ENCODE measurements at regions of chr1 and their contacts with region 1.

Region 1: DNA sequence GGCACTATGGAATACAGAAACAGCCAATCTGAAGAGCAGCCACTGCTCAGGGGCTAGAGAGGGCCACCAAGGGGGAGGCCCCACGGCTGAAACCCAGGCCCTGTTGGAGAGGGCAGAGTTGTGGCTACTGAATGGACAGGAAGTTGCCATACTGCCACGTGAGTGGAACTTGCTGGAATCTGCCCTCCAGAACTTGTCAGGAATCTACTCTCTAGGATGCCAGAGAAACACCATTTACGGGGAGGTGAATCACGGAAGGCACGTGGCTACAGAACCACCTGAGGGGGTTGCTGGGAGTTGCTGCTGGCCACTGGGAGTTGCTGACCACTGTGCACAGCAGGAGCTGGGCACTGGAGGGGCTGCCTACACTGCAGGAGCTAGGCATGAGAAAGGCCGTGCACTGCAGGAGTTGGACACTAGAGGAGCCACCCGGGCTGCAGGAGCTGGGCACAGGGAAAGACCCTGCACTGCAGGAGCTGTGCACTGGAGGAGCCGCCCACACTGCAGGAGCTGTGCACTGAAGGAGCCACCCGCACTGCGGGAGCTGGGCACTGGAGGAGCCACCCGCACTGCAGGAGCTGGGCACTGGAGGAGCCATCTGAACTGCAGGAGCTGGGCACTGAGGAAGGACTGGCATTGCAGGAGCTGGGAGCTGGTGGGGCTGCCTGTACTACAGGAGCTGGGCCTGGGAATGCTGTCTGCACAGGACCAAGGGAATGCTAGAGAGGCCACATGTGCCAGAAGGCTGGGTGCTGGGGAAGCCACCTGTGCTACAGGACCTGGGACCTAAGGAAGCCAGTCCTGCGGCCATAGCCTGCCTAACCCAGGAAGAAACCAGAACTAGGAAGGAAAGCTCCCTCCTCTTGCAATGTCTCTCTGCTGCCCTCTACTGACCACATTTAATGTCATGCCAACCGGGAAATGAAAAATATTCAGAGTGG is 343.4 kb downstream of the MATN1 start:
- DNase-seq: peak in 3 of 5 donors; percentile 43 to 47 (median 43)
- ATAC-seq: peak; percentile 32 to 82 (median 76)
- H3K4me3 ChIP-seq: no peak overlapping the region
- H3K27ac ChIP-seq: no peak overlapping the region
- H3K4me1 ChIP-seq: peaks cover 0 to 6% (median 0%) of the 10 kb centered on the region in 12 donors
- H3K27me3 ChIP-seq: peaks cover 0 to 30% (median 4%) of the 10 kb centered on the region in 9 donors
- CTCF ChIP-seq: peak; percentile 72 to 94 (median 86)
- POLR2A ChIP-seq: no peak

Region 2: DNA sequence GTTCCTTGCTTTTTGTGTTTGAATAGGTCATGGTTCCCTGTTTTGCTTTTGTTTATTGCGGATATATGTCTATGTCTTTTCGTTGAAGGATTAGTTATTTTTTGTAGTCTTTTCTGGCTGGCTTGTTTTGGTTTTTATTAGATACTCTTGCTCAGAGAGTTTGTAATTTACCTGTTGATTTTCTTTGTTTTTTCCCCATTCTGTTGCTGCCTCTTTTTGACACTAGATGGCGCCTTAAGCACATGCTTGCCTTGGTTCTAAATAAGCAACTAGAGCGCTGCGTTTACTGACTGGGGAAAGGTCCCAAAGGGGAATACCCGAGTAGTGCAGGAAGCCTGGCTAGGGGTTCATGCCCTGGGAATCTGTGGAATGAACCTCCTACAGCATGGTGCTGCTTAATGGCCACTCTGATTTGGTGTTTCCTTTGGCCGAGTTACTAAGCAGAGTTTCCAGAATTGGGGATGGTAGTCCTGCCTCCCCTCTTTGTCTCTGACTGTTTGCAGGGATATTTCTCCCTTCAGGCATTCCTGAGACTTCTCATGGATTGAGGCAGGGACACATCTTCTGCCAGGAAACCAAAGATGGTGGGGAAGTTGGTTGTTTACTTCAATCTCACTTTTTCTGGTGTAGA is 1000.4 kb before region 1 on chr1:
- intact Hi-C with region 1: loop called in 1 of 10 experiments (anchors 10 kb)
- DNase-seq: no peak
- ATAC-seq: no peak
- H3K4me3 ChIP-seq: no peak overlapping the region
- H3K27ac ChIP-seq: no peak overlapping the region
- H3K4me1 ChIP-seq: no peaks in the 10 kb centered on the region
- H3K27me3 ChIP-seq: peaks cover 0 to 41% (median 9%) of the 10 kb centered on the region in 9 donors
- CTCF ChIP-seq: peak in 8 of 12 donors; percentile 9 to 33 (median 22)
- POLR2A ChIP-seq: no peak

Region 3: GRCh38 chr1:29798699-29799566 is 581.0 kb before region 1 on chr1:
- intact Hi-C with region 1: loop called in 7 of 10 experiments (anchors 5 to 10 kb)
- DNase-seq: no peak
- ATAC-seq: no peak
- H3K4me3 ChIP-seq: no peak overlapping the region
- H3K27ac ChIP-seq: no peak overlapping the region
- H3K4me1 ChIP-seq: peaks cover 0 to 2% (median 0%) of the 10 kb centered on the region in 12 donors
- H3K27me3 ChIP-seq: peaks cover 0 to 25% (median 4%) of the 10 kb centered on the region in 9 donors
- CTCF ChIP-seq: no peak
- POLR2A ChIP-seq: no peak

Region 4: DNA sequence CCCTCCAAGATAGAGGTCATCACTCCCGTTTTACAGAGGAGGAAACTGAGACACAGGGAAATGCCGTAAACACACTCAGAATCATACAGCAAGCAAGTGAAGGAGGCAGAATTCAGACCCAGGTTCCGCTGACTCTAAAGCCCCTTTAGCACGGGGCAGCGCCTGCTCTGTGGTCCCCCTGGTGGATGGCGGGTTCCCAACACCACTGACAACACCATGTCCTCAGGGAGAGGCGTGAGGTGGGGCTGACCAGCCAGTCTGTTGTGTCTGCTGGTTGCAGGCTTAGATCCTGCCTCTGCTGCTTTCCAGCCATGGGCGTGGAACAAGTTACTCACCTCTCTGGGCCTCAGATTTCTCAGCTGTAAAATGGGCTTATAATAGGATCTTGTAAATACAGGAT is 273.8 kb before region 1 on chr1:
- intact Hi-C with region 1: loop called in 3 of 10 experiments (anchors 10 kb)
- DNase-seq: peak in 1 of 5 donors; percentile 28
- ATAC-seq: peak in 3 of 4 donors; percentile 35 to 70 (median 65)
- H3K4me3 ChIP-seq: no peak overlapping the region
- H3K27ac ChIP-seq: no peak overlapping the region
- H3K4me1 ChIP-seq: no peaks in the 10 kb centered on the region
- H3K27me3 ChIP-seq: peaks cover 0 to 67% (median 11%) of the 10 kb centered on the region in 9 donors
- CTCF ChIP-seq: peak; percentile 19 to 65 (median 35)
- POLR2A ChIP-seq: no peak

Region 5: DNA sequence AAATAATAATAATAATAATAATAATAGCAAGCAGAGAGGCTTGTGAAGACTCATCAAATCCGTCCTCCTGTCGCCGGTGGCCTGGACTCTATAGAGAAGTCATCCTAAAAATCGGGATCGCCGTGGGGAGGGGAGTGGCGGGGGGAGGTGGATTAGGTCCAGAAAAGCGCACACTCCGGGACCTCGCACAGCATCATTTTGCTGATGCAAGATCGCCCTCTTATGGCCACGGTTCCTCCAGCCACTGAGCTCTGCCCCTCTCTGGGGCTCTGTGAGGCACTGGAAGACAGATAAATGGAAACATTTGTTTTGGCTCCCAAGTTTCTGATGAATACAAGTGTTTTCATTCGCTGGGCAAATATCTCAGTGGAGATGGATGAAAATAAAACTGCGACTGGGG is 268.5 kb before region 1 on chr1:
- intact Hi-C with region 1: loop called in 3 of 10 experiments (anchors 10 kb)
- DNase-seq: peak in 3 of 5 donors; percentile 35 to 43 (median 39)
- ATAC-seq: peak in 3 of 4 donors; percentile 75 to 78 (median 76)
- H3K4me3 ChIP-seq: no peak overlapping the region
- H3K27ac ChIP-seq: no peak overlapping the region
- H3K4me1 ChIP-seq: no peaks in the 10 kb centered on the region
- H3K27me3 ChIP-seq: peaks cover 0 to 67% (median 16%) of the 10 kb centered on the region in 9 donors
- CTCF ChIP-seq: peak; percentile 39 to 70 (median 58)
- POLR2A ChIP-seq: no peak

Region 6: GRCh38 chr1:30601316-30602085 is 221.5 kb after region 1 on chr1:
- intact Hi-C with region 1: no loop called
- DNase-seq: no peak
- ATAC-seq: no peak
- H3K4me3 ChIP-seq: no peak overlapping the region
- H3K27ac ChIP-seq: no peak overlapping the region
- H3K4me1 ChIP-seq: no peaks in the 10 kb centered on the region
- H3K27me3 ChIP-seq: peaks cover 0 to 38% (median 2%) of the 10 kb centered on the region in 9 donors
- CTCF ChIP-seq: no peak
- POLR2A ChIP-seq: no peak